ENCODE measurements at regions of chr5 and their contacts with region 1.

Region 1: GRCh38 chr5:231661-232060 is 13.5 kb downstream of the SDHA start:
- DNase-seq: no peak
- ATAC-seq: no peak
- H3K4me3 ChIP-seq: no peak overlapping the region
- H3K27ac ChIP-seq: no peak overlapping the region
- H3K4me1 ChIP-seq: no peaks in the 10 kb centered on the region
- H3K27me3 ChIP-seq: no peaks in the 10 kb centered on the region
- CTCF ChIP-seq: no peak
- POLR2A ChIP-seq: no peak
- RAD21 ChIP-seq: no peak

Region 2: GRCh38 chr5:30131-30530 is 201.5 kb before region 1 on chr5:
- CTCF ChIA-PET with region 1: no interaction called
- POLR2A ChIA-PET with region 1: no interaction called
- dilution Hi-C with region 1: no loop called
- in situ Hi-C with region 1: no loop called
- intact Hi-C with region 1: no loop called
- DNase-seq: no peak
- ATAC-seq: no peak
- H3K4me3 ChIP-seq: no peak overlapping the region
- H3K27ac ChIP-seq: no peak overlapping the region
- H3K4me1 ChIP-seq: no peaks in the 10 kb centered on the region
- H3K27me3 ChIP-seq: peaks cover 10% of the 10 kb centered on the region
- CTCF ChIP-seq: no peak
- POLR2A ChIP-seq: no peak
- RAD21 ChIP-seq: no peak

Region 3: GRCh38 chr5:159441-160172 is 72.1 kb before region 1 on chr5:
- CTCF ChIA-PET with region 1: no interaction called
- POLR2A ChIA-PET with region 1: no interaction called
- dilution Hi-C with region 1: no loop called
- in situ Hi-C with region 1: no loop called
- intact Hi-C with region 1: no loop called
- DNase-seq: peak; percentile 87
- ATAC-seq: peak; percentile 57
- H3K4me3 ChIP-seq: no peak overlapping the region
- H3K27ac ChIP-seq: no peak overlapping the region
- H3K4me1 ChIP-seq: peaks cover 12% of the 10 kb centered on the region
- H3K27me3 ChIP-seq: no peaks in the 10 kb centered on the region
- CTCF ChIP-seq: no peak
- POLR2A ChIP-seq: no peak
- RAD21 ChIP-seq: no peak

Region 4: DNA sequence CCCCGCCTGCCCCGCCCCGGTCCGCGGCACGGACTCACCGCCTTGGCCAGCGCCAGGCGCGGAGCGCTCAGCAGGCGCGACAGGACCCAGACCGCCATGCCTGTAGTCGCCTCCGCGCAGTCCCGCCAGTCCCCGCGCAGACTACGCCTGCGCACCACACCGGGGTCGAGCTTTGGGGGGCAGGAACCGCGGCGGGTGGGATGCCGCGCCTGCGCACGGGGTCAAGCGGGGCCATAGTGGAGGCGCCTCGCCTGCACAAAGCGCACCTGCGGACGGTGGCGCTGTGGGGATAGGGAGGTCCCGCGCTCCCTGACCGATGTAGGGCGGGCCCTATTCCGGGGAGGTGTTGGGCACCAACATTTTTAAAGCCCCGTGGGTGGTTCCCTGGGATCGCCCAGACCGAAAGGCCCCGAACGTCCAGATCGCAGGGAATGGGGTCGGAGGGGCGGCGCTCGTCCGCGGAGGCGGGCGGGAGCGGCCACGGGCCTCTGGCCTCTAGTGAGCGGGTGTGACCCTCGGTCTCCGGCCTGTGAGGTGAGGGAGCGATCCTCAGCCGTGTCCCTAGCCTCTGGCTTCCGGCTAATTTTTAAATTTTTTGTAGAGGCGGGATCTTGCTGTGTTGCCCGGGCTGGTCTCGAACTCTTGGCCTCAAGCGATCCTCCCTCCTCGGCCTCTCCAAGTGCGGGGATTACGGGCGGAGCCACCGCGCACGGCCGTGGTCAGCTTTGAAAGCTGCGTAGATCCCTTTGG is 1362.9 kb after region 1 on chr5:
- CTCF ChIA-PET with region 1: no interaction called
- POLR2A ChIA-PET with region 1: no interaction called
- dilution Hi-C with region 1: no loop called
- in situ Hi-C with region 1: loop called (anchors 10 kb)
- intact Hi-C with region 1: no loop called
- DNase-seq: no peak
- ATAC-seq: peak; percentile 60
- H3K4me3 ChIP-seq: peak overlapping the region; percentile 20; the same call in 1 of the 2 replicates
- H3K27ac ChIP-seq: no peak overlapping the region
- H3K4me1 ChIP-seq: no peaks in the 10 kb centered on the region
- H3K27me3 ChIP-seq: peaks cover 24% of the 10 kb centered on the region
- CTCF ChIP-seq: no peak
- POLR2A ChIP-seq: no peak
- RAD21 ChIP-seq: no peak

Measured in IMR-90 (cell line).